Activated T-helper 1 cell treated with anti-CD3 and anti-CD28 coated beads, Interleukin-12 subunit alpha, Interleukin-12 subunit beta, Interleukin-2, Interleukin-4 antibody, amounts not matched to agents 30 ng/mL and 10 ng/mL and 1 ng/mL, durations not matched to agents 14 hours and 24 hours and 36 hours (primary cell): ENCODE measurements at regions of chr1 and their contacts with region 1.

Region 1: GRCh38 chr1:40385437-40386358 is 12.2 kb downstream of the SMAP2 start:
- DNase-seq: peak; percentile 73
- H3K4me3 Mint-ChIP-seq: peak overlapping the region; percentile 82
- H3K27ac Mint-ChIP-seq: peak overlapping the region; percentile 99
- H3K4me1 Mint-ChIP-seq: peaks cover 89% of the 10 kb centered on the region
- H3K27me3 Mint-ChIP-seq: no peaks in the 10 kb centered on the region

Region 2: DNA sequence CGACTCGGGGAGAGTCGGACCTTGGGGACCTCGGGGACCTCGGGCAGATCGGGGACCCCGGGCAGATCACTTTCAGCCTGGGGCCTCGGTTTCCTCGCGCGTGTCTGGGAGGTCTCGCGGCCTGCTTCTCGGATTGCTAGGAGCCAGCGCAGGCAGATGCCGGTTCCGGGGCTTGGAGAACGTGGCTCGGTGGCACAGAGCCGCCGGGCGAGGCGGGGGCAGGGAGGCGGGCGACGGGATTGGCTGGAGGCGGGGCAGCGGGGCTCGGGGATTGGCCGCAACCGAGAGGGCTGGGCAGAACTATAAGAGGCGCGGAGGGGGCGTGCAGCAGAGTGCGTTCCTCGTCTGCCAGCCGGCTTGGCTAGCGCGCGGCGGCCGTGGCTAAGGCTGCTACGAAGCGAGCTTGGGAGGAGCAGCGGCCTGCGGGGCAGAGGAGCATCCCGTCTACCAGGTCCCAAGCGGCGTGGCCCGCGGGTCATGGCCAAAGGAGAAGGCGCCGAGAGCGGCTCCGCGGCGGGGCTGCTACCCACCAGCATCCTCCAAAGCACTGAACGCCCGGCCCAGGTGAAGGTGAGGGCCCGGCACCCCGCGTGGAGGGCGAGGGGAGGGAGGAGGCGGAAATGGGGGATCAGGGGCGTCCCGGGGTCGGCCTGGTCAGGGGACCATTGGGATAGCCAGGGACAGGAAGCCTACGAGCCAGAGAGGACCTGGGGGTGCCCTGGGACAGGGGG is 430.7 kb before region 1 on chr1 and contains the start of gene MFSD2A:
- intact Hi-C with region 1: loop called (anchors 10 kb)
- DNase-seq: peak; percentile 80
- H3K4me3 Mint-ChIP-seq: peak within 1 kb of the TSS; percentile 98
- H3K27ac Mint-ChIP-seq: peak within 1 kb of the TSS; percentile 94
- H3K4me1 Mint-ChIP-seq: peaks cover 49% of the 10 kb centered on the region
- H3K27me3 Mint-ChIP-seq: no peaks in the 10 kb centered on the region
- total RNA-seq, gene MFSD2A: 55.3 and 56.2 TPM in 2 replicates

Region 3: DNA sequence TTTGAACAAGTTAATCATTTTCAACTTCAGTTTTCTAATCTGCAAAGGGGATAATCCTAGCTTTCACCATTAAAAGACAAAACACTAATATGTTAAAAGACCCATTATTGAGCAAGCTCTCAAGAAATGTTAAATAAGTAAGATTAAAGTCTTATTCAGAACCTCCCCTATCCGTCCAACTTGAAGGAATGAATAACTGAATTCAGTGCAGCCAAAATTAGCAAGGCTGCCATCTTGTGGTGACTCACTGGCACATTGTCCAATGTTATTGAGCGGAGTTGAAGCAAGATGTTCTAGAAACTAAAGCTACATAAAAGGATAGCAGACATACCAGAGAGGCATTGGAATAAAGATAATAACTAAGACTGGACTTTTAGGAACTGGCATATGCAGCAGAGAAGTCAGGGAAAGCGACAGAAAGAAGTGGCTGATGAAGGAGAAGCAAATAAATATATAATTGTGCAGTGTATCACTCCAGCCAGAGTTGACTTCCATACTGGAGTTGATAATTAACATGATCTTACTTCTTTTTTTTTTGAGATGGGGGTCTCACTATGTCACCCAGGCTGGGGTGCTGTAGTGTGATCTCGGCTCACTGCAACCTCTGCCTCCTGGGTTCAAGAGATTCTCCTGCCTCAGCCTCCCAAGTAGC is 353.3 kb before region 1 on chr1:
- intact Hi-C with region 1: no loop called
- DNase-seq: peak; percentile 24
- H3K4me3 Mint-ChIP-seq: no peak overlapping the region
- H3K27ac Mint-ChIP-seq: no peak overlapping the region
- H3K4me1 Mint-ChIP-seq: peaks cover 36% of the 10 kb centered on the region
- H3K27me3 Mint-ChIP-seq: peaks cover 7% of the 10 kb centered on the region

Region 4: DNA sequence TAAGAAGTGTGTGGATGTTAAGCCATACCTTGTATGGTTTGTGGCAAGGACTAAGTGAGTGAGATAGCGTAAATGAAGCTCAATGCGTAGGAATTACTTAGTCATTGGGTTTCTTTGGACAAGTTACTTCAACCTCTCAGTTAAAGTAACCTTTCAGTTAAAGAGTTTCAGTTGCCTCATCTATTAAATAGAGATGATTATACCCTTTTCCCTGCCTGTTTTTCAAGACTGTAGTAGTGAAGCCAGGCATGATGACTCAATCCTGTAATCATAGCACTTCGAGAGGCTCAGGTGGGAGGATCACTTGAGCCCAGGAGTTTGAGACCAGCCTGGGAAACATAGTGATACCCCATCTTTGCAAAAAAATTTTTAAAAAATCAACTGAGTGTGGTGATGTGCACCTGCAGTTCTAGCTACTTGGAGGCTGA is 121.3 kb before region 1 on chr1:
- intact Hi-C with region 1: loop called (anchors 1 kb)
- DNase-seq: no peak
- H3K4me3 Mint-ChIP-seq: peak overlapping the region; percentile 58
- H3K27ac Mint-ChIP-seq: peak overlapping the region; percentile 88
- H3K4me1 Mint-ChIP-seq: peaks cover 53% of the 10 kb centered on the region
- H3K27me3 Mint-ChIP-seq: no peaks in the 10 kb centered on the region

Region 5: GRCh38 chr1:40338745-40339424 is 46.8 kb before region 1 on chr1:
- intact Hi-C with region 1: loop called (anchors 1 kb)
- DNase-seq: peak; percentile 84
- H3K4me3 Mint-ChIP-seq: peak overlapping the region; percentile 38
- H3K27ac Mint-ChIP-seq: peak overlapping the region; percentile 75
- H3K4me1 Mint-ChIP-seq: peaks cover 53% of the 10 kb centered on the region
- H3K27me3 Mint-ChIP-seq: no peaks in the 10 kb centered on the region

Region 6: GRCh38 chr1:40373338-40374283 is 12.1 kb before region 1 on chr1 and contains the start of gene SMAP2:
- intact Hi-C with region 1: loop called (anchors 1 kb)
- DNase-seq: peak; percentile 95
- H3K4me3 Mint-ChIP-seq: peak within 1 kb of the TSS; percentile 97
- H3K27ac Mint-ChIP-seq: peak within 1 kb of the TSS; percentile 99
- H3K4me1 Mint-ChIP-seq: peaks cover 59% of the 10 kb centered on the region
- H3K27me3 Mint-ChIP-seq: peaks cover 3% of the 10 kb centered on the region
- total RNA-seq, gene SMAP2: 196 and 201 TPM in 2 replicates

Region 7: DNA sequence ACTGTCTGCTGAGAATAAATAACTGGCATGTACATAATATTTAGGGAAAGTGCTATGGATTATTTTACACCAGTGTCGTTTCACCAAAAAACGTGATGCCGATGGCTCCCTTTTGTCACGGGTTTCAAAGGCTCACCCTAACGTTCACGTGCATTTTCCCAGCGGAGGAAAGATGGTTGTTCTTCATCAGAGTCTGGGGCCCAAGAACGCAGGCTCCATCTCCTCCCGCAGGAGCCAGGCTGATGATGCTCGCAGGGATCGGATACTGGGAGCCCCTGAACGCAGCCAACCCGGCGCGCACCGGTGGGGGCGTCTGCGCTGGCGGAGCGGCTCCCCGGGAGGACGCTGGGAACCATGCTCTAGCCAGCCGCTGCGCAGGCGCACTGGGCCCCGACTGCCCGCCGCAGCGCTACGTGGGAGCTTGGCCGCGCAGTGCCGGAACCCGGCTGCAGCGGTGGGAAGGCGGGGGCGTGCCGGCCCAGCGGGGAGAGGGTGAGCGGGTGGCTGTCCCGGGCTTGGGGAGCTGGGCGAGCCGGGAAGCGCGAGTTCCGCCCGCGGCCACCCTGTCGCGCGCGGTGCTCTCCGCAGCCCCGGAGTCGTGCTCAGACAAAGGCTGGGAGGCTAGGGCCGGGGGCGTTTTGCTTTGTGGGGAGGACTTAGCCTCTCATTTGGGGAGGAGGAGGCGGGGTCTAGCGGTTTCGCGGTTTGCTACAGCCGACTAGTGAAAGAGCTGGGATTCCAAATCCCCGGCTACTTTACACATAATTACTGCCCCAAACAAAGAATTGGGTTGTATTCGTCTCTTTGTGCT is 64.2 kb after region 1 on chr1 and contains the start of gene ZFP69B:
- intact Hi-C with region 1: loop called (anchors 1 kb)
- DNase-seq: peak; percentile 86
- H3K4me3 Mint-ChIP-seq: peak within 1 kb of the TSS; percentile 84
- H3K27ac Mint-ChIP-seq: peak within 1 kb of the TSS; percentile 90
- H3K4me1 Mint-ChIP-seq: peaks cover 35% of the 10 kb centered on the region
- H3K27me3 Mint-ChIP-seq: no peaks in the 10 kb centered on the region
- total RNA-seq, gene ZFP69B: 5.1 and 5.8 TPM in 2 replicates

Region 8: GRCh38 chr1:41241782-41242341 is 856.2 kb after region 1 on chr1 and contains the start of gene SCMH1:
- intact Hi-C with region 1: no loop called
- DNase-seq: peak; percentile 47
- H3K4me3 Mint-ChIP-seq: peak within 1 kb of the TSS; percentile 86
- H3K27ac Mint-ChIP-seq: peak within 1 kb of the TSS; percentile 67
- H3K4me1 Mint-ChIP-seq: peaks cover 31% of the 10 kb centered on the region
- H3K27me3 Mint-ChIP-seq: no peaks in the 10 kb centered on the region
- total RNA-seq, gene SCMH1: 16.0 and 18.5 TPM in 2 replicates